SK-N-SH (cell line): ENCODE measurements at regions of chr12 and their contacts with region 1.

Region 1: GRCh38 chr12:3299929-3300832 is 190.8 kb upstream of the PRMT8 start:
- DNase-seq: peak; percentile 89
- H3K4me3 ChIP-seq: peak overlapping the region; percentile 15 to 56; a peak in 3 of 4 replicates
- H3K27ac ChIP-seq: peak overlapping the region in 1 of 2 experiments; percentile 69; a peak in 2 of 4 replicates
- H3K4me1 ChIP-seq: peaks cover 4 to 39% of the 10 kb centered on the region in 2 experiments; a peak in 3 of 4 replicates
- H3K27me3 ChIP-seq: no peaks in the 10 kb centered on the region
- CTCF ChIP-seq: peak; percentile 93
- EP300 ChIP-seq: peak in 1 of 2 experiments; percentile 51; a peak in 1 of 4 replicates
- RAD21 ChIP-seq: peak; percentile 87

Region 2: GRCh38 chr12:3242199-3242863 is 57.9 kb before region 1 on chr12:
- CTCF ChIA-PET with region 1: no interaction called
- POLR2A ChIA-PET with region 1: no interaction called
- DNase-seq: no peak
- H3K4me3 ChIP-seq: no peak overlapping the region
- H3K27ac ChIP-seq: no peak overlapping the region
- H3K4me1 ChIP-seq: peaks cover 0 to 1% of the 10 kb centered on the region in 2 experiments; a peak in 1 of 4 replicates
- H3K27me3 ChIP-seq: no peaks in the 10 kb centered on the region
- CTCF ChIP-seq: no peak
- EP300 ChIP-seq: no peak
- RAD21 ChIP-seq: no peak

Region 3: GRCh38 chr12:3319723-3320492 is 19.7 kb after region 1 on chr12:
- CTCF ChIA-PET with region 1: interaction called, 156 read pairs
- POLR2A ChIA-PET with region 1: no interaction called
- DNase-seq: no peak
- H3K4me3 ChIP-seq: no peak overlapping the region
- H3K27ac ChIP-seq: no peak overlapping the region
- H3K4me1 ChIP-seq: peaks cover 0 to 33% of the 10 kb centered on the region in 2 experiments; a peak in 2 of 4 replicates
- H3K27me3 ChIP-seq: peaks cover 9% of the 10 kb centered on the region
- CTCF ChIP-seq: no peak; the same call in 1 of the 2 replicates
- EP300 ChIP-seq: no peak
- RAD21 ChIP-seq: no peak

Region 4: DNA sequence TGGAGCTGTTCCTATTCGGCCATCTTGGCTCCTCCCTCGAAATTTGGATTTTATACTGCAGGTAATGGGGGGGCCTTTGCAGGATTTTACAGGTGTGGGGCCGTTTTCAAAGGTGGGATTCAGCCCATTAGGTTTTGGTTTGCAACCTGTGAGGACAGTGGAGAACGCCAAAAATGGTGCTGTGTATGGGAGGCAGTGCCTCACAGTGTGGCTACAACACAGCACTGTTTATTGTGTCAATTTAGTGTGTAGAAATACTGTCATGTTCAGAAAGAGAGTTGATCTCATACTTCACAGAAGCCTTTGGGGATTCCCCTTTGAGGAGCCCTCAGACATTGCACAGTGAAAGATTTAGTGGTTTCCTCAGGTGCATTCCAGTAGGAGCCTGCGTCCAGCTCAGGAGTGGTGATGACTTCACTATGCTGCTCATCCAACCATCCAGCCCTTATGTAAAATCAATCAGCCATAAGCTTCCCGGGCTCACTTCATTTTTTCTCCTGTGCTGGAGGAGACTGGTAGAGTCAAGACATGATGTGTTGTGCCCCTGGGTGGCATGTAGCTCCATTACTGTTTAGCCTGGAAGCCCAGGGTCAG is 98.1 kb after region 1 on chr12:
- CTCF ChIA-PET with region 1: no interaction called
- POLR2A ChIA-PET with region 1: no interaction called
- DNase-seq: no peak
- H3K4me3 ChIP-seq: no peak overlapping the region
- H3K27ac ChIP-seq: no peak overlapping the region
- H3K4me1 ChIP-seq: no peaks in the 10 kb centered on the region
- H3K27me3 ChIP-seq: no peaks in the 10 kb centered on the region
- CTCF ChIP-seq: no peak
- EP300 ChIP-seq: no peak
- RAD21 ChIP-seq: no peak

Region 5: DNA sequence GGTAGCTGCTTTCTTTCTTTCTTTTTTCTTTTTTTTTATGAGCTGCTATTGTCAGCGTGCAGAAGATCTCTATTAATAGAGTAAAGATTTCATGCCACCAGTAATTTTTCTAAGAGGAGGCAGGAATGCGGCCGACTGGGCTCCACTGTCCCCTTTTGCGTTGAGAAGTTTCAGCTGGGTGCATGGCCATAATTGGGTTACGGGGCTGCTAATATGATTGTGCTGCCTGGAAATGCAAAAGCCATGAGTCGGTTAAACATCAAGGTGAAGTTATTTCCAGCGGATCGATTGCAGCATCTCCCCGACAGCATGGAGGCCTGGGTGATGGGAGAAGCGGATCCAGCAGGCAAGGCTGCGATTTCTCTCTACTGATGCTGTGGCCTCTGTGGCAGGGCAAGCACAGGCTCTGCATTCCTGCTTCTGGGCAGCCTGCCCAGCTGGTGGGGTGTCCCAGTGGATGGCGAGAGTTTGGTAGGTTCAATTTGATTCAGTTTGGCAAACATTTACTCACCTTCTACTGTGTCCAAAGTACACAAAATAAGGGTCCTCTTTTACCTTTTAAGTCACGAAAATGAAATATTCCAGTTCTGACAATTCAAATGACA is 136.4 kb after region 1 on chr12:
- CTCF ChIA-PET with region 1: interaction called, 11 read pairs
- POLR2A ChIA-PET with region 1: no interaction called
- DNase-seq: peak; percentile 61
- H3K4me3 ChIP-seq: no peak overlapping the region
- H3K27ac ChIP-seq: no peak overlapping the region
- H3K4me1 ChIP-seq: peaks cover 0 to 7% of the 10 kb centered on the region in 2 experiments; a peak in 1 of 4 replicates
- H3K27me3 ChIP-seq: peaks cover 9% of the 10 kb centered on the region; the same call in 1 of the 2 replicates
- CTCF ChIP-seq: no peak
- EP300 ChIP-seq: no peak
- RAD21 ChIP-seq: no peak

Region 6: DNA sequence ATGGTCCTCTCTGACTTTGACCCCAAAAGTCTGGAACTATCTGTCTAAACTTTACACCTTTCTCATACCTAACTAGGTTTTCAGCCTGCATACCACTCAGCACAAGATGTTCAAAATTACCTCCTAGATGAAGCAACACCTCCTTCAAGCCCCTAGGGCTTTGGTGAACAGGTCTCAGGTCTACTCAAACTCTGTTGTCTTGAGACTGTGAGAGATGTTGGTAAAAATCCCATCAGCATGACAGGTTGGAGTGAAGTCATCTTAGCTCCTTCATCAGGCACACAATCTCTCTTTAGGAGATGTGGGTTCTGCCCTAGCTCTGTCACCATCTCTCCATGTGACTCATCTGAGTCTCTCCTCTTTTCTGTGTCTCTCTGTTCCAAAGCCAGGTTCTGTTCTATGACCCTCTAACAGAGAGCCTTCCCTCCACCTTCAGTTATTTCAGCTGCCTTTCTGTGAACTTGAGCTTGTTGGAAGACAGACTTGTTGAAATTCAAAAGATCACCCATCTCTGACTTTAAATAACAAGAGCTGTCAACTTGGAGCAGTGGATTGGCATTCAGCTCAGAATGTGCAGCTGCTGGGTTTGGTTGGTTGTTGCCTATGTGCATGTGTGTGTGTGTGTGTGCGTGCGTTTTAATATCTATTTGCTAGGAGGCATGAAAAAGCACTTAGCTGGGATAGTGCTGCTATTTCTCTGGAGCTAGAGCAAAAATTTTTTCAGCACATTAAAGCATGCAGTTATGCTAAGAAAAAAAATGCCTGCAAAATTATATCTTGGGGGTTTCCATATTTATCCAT is 322.0 kb after region 1 on chr12:
- CTCF ChIA-PET with region 1: interaction called, 11 read pairs
- POLR2A ChIA-PET with region 1: no interaction called
- DNase-seq: no peak
- H3K4me3 ChIP-seq: no peak overlapping the region
- H3K27ac ChIP-seq: no peak overlapping the region
- H3K4me1 ChIP-seq: peaks cover 0 to 4% of the 10 kb centered on the region in 2 experiments; a peak in 1 of 4 replicates
- H3K27me3 ChIP-seq: no peaks in the 10 kb centered on the region; the same call in 1 of the 2 replicates
- CTCF ChIP-seq: no peak
- EP300 ChIP-seq: no peak
- RAD21 ChIP-seq: no peak

Region 7: GRCh38 chr12:3673981-3674708 is 374.0 kb after region 1 on chr12:
- CTCF ChIA-PET with region 1: interaction called, 95 read pairs
- POLR2A ChIA-PET with region 1: no interaction called
- DNase-seq: no peak
- H3K4me3 ChIP-seq: no peak overlapping the region
- H3K27ac ChIP-seq: no peak overlapping the region
- H3K4me1 ChIP-seq: peaks cover 0 to 2% of the 10 kb centered on the region in 2 experiments; a peak in 1 of 4 replicates
- H3K27me3 ChIP-seq: no peaks in the 10 kb centered on the region; the same call in 1 of the 2 replicates
- CTCF ChIP-seq: no peak
- EP300 ChIP-seq: no peak
- RAD21 ChIP-seq: no peak

Region 8: DNA sequence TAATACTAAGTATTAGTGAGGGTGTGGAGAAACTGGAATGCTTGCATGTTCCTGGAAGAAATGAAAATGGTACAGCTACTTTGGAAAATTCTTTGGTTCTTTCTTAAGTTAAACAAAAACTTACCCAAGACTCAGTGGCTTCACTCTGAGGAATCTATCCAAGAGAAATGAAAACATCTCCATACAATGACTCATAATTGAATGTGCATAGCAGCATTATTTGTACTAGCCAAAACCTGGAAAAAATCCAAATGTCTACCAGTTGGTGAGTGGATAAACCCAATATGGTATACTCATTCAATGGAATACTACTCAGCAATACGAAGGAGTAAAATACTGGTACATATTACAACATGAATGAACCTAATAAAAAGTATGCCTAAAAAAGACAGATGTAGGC is 470.7 kb after region 1 on chr12:
- CTCF ChIA-PET with region 1: interaction called, 203 read pairs
- POLR2A ChIA-PET with region 1: no interaction called
- DNase-seq: no peak
- H3K4me3 ChIP-seq: no peak overlapping the region
- H3K27ac ChIP-seq: no peak overlapping the region
- H3K4me1 ChIP-seq: no peaks in the 10 kb centered on the region
- H3K27me3 ChIP-seq: peaks cover 6% of the 10 kb centered on the region; the same call in 1 of the 2 replicates
- CTCF ChIP-seq: no peak
- EP300 ChIP-seq: no peak
- RAD21 ChIP-seq: no peak

Region 9: DNA sequence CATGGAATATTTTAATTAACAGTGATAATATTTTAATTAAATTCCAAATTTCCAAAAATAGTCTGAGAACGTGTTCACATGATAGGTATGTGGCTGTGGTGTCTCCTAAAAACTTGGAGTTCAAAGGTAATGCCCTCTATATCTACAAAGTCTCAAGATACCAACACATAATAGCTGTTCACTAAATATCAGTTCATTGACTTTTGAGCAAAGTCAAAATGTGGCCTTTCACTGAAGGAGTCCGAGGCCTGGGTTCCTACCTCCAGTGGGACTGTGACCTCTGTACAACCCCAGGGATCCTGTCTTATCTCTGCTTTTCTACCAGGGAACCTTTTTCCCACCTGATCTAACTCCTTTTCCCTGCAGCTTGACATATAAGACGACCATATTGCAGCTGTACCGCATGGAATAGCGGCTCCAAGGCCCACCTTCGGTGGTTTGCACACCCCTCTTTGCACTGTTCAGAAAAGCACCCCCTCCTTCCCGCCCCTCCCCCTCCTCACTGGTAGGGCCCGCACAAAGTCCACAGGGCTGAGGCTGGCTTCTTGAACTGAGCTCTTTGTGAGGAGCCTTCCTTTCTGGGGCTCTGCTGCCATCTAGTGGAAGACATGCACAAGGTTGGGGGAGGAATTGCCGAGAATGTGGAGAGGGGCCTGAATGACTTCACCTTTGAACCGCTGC is 976.5 kb after region 1 on chr12:
- CTCF ChIA-PET with region 1: interaction called, 20 read pairs
- POLR2A ChIA-PET with region 1: no interaction called
- DNase-seq: peak; percentile 84
- H3K4me3 ChIP-seq: no peak overlapping the region; a peak in 1 of 4 replicates
- H3K27ac ChIP-seq: no peak overlapping the region
- H3K4me1 ChIP-seq: peaks cover 0 to 4% of the 10 kb centered on the region in 2 experiments; a peak in 2 of 4 replicates
- H3K27me3 ChIP-seq: peaks cover 97% of the 10 kb centered on the region
- CTCF ChIP-seq: peak; percentile 91
- EP300 ChIP-seq: no peak
- RAD21 ChIP-seq: peak; percentile 89